OCI-LY7 (cell line): ENCODE measurements at regions of chr15 and their contacts with region 1.

Region 1: GRCh38 chr15:59917504-59918157 is 86.5 kb upstream of the FOXB1 start:
- DNase-seq: peak; percentile 53
- H3K4me3 ChIP-seq: no peak overlapping the region
- H3K27ac ChIP-seq: no peak overlapping the region
- H3K4me1 ChIP-seq: no peaks in the 10 kb centered on the region
- CTCF ChIP-seq: peak; percentile 81

Region 2: DNA sequence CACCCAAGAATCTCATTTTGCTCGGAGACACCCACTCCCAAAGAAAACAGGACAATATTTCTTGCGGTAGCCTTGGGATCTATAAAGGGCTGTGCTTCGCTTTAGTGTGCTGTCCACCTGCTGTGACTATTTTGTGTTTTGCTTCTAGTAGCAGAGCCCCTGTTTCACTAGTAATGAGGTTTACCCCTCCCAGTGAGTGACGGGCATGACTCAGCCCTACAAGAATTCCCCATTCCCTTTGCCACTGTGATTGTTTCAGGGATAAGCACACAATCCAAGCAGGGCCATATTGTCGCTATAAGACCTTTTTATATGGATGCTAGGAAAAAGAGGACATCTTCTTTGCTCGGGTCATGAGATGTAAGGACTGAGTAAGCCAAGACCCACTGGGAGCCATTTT is 24.0 kb after region 1 on chr15:
- CTCF ChIA-PET with region 1: no interaction called
- POLR2A ChIA-PET with region 1: no interaction called
- intact Hi-C with region 1: no loop called
- DNase-seq: no peak
- H3K4me3 ChIP-seq: no peak overlapping the region
- H3K27ac ChIP-seq: no peak overlapping the region
- H3K4me1 ChIP-seq: no peaks in the 10 kb centered on the region
- CTCF ChIP-seq: no peak

Region 3: DNA sequence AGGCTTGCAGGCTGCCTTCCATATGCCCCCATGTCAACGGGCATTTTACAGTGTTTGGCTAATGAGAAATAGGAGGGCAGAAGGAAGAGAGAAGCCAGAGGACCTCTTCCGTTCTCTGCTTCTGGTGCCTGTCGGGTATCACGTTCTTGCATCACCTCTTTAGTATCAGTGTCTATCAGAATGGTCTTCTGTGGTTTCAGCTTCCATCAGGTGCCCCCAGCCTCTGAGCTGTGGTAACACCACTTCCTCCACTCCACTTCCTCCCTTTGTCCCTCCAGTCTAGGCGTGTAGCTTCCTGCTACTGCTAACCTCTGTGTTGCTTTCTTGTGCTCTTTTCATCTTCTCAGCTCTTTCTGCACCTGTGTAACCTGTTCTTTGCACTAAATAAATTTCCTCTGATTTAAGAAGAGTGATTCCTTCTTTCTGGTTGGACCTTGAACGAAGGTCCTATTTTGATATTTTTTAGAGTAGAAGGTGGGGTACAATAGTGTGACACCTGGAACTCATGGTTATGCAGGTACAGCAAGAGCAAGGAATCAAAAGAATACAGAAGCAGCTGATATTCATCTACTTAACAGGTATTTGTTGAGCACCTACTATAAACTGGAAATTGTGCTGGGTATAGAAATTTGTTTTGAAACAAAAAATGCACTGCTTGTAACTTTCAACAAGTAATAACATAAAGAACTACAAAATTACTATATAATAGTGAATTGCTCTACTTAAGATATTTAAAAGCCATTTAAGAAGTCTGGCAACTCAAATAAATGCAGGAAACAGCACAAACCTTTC is 59.0 kb after region 1 on chr15:
- CTCF ChIA-PET with region 1: no interaction called
- POLR2A ChIA-PET with region 1: no interaction called
- intact Hi-C with region 1: no loop called
- DNase-seq: peak; percentile 69
- H3K4me3 ChIP-seq: no peak overlapping the region
- H3K27ac ChIP-seq: no peak overlapping the region
- H3K4me1 ChIP-seq: peaks cover 11% of the 10 kb centered on the region
- CTCF ChIP-seq: no peak

Region 4: DNA sequence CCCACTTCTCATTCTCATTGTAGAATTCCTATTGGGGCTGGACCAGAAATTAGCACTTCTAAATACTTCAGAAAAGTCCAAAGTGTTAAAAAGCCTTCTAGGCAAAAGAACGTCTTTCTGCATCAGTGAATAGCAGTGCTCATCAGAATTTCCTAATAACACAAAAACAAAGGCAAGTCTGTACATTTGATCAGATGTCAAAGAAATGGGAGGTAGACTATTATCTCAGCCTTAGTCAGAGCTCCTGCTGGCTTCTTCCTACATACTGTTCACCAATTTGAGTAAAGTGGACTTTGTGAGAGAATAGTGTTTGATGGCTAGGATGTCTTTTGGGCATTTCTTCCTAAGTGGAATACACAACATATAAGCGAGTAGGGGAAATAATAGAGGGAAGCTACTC is 135.2 kb after region 1 on chr15:
- CTCF ChIA-PET with region 1: no interaction called
- POLR2A ChIA-PET with region 1: no interaction called
- intact Hi-C with region 1: no loop called
- DNase-seq: no peak
- H3K4me3 ChIP-seq: no peak overlapping the region
- H3K27ac ChIP-seq: no peak overlapping the region
- H3K4me1 ChIP-seq: no peaks in the 10 kb centered on the region
- CTCF ChIP-seq: no peak

Region 5: GRCh38 chr15:60128000-60128376 is 210.4 kb after region 1 on chr15:
- CTCF ChIA-PET with region 1: no interaction called
- POLR2A ChIA-PET with region 1: no interaction called
- intact Hi-C with region 1: loop called (anchors 10 kb)
- DNase-seq: no peak
- H3K4me3 ChIP-seq: peak overlapping the region; percentile 66
- H3K27ac ChIP-seq: peak overlapping the region; percentile 22
- H3K4me1 ChIP-seq: peaks cover 17% of the 10 kb centered on the region
- CTCF ChIP-seq: no peak

Region 6: GRCh38 chr15:60179786-60180391 is 262.3 kb after region 1 on chr15:
- CTCF ChIA-PET with region 1: no interaction called
- POLR2A ChIA-PET with region 1: no interaction called
- intact Hi-C with region 1: loop called (anchors 5 kb)
- DNase-seq: peak; percentile 51
- H3K4me3 ChIP-seq: no peak overlapping the region
- H3K27ac ChIP-seq: no peak overlapping the region
- H3K4me1 ChIP-seq: no peaks in the 10 kb centered on the region
- CTCF ChIP-seq: peak; percentile 97

Region 7: DNA sequence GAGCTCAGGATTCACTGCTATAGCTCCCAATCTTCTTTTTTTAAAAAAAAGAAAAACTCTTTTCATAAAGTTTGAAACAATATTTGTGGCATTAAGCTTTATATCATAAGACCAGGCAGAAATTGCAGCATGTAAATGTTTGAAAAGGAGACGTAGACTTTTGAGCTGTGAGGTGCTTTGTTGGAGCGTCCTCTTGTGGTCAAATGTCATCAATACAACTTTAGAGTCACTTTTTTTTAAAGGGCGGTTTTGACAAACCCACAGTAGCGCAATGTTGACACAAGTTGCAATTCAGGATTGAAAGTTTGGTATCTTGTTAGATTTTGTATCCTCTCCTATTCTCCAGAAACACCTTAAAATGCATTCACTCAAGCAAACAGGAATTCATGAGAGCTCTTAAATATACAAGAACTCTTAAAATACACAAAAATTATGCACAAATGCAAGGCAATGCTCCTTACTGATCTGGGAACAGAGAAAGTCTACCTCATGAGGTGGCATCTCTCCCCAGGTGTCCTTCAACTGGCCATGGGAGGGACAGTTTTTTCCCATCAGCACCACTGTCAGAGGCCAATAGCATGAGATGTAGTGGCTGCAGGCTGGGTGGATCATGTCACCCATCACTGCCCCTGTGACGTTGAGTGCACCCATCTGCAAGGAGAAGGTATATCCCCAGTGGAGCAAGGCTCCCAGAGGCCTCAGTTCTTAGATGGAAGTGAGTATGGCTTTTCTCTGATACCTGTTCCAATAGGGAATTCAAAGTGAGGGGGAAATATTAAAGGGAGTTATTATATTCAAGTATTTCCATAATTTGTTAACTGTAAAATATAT is 409.4 kb after region 1 on chr15:
- CTCF ChIA-PET with region 1: no interaction called
- POLR2A ChIA-PET with region 1: no interaction called
- intact Hi-C with region 1: loop called (anchors 5 kb)
- DNase-seq: peak; percentile 51
- H3K4me3 ChIP-seq: no peak overlapping the region
- H3K27ac ChIP-seq: no peak overlapping the region
- H3K4me1 ChIP-seq: no peaks in the 10 kb centered on the region
- CTCF ChIP-seq: peak; percentile 95